ENCODE measurements at regions of chr2 and their contacts with region 1.

Region 1: GRCh38 chr2:133641497-133641896 is 73.2 kb upstream of the NCKAP5 start:
- DNase-seq: peak; percentile 99
- H3K4me3 ChIP-seq: peak overlapping the region; percentile 41 to 50 (median 44)
- H3K27ac ChIP-seq: peak overlapping the region; percentile 59
- H3K4me1 ChIP-seq: peaks cover 26% of the 10 kb centered on the region
- H3K27me3 ChIP-seq: no peaks in the 10 kb centered on the region
- CTCF ChIP-seq: peak; percentile 68 to 83

Region 2: DNA sequence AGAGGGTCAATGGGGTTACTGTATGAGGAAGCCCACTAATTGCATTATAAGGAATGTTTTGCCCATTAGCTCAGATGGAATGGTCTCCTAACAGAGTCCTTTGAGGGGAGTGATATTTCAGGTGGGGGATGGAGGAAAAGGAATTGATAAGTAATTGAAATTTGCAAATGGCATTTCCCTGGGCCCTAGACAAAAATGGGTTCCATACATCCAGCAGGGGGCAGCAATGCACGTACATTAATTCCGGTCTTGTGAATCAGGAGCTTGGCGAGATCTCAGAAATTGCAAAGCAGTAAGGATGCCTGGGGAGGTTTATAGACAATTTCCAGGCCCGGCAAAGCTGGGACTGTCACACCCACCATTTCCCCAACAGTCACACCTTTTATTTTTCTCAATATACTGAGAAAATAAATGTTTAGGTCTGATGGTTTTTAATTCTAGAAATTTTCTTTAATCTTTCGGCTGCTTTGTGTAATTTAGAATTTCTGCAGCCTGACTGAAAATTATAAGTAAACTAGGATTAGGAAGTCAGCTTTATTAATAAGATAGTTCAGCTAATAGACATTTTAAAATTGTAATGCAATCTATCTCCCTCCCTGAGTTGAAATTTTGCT is 1094.3 kb before region 1 on chr2:
- CTCF ChIA-PET with region 1: no interaction called
- dilution Hi-C with region 1: no loop called
- in situ Hi-C with region 1: no loop called
- intact Hi-C with region 1: loop called (anchors 5 kb)
- DNase-seq: peak; percentile 56
- H3K4me3 ChIP-seq: no peak overlapping the region
- H3K27ac ChIP-seq: no peak overlapping the region
- H3K4me1 ChIP-seq: peaks cover 11% of the 10 kb centered on the region
- H3K27me3 ChIP-seq: no peaks in the 10 kb centered on the region
- CTCF ChIP-seq: peak; percentile 55 to 71

Region 3: GRCh38 chr2:133266041-133266925 is 375.2 kb before region 1 on chr2:
- CTCF ChIA-PET with region 1: no interaction called
- dilution Hi-C with region 1: no loop called
- in situ Hi-C with region 1: no loop called
- intact Hi-C with region 1: loop called (anchors 1 kb)
- DNase-seq: peak; percentile 33
- H3K4me3 ChIP-seq: peak overlapping the region in 2 of 3 experiments; percentile 57
- H3K27ac ChIP-seq: no peak overlapping the region
- H3K4me1 ChIP-seq: peaks cover 13% of the 10 kb centered on the region
- H3K27me3 ChIP-seq: no peaks in the 10 kb centered on the region
- CTCF ChIP-seq: peak in 1 of 2 donors; percentile 25

Region 4: DNA sequence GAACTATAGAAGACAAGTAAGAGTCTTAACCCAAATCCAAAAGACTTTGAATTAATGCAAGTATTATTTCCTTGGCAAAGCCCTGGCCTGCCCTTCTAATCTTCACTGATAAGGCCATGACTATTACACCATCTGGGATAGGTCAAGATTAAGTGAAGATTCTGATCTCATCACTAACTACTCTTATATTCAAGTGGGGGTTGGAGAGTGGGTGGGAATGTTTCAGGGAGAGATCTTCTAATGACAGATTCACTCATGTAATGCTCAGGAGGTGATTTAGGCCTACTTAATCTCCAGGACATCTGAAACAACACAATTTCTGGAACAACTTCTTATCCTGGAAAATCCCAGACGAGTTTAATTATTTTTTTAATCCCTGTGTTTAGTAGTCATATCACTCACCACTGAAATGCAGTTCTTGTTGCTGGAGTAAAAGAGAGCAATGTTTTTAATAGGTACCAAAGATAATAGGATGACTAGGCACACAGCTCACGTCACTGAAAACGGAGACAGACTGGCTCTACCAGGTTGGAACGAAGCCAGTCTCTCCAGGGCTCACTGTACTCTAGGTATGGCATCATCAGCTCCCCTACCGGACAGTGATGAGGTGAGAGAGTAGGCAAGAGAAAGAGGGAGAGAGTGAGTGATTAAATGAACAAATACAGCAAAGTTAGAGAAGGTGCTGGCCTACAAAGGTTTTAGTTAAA is 206.4 kb before region 1 on chr2:
- CTCF ChIA-PET with region 1: no interaction called
- dilution Hi-C with region 1: no loop called
- in situ Hi-C with region 1: no loop called
- intact Hi-C with region 1: loop called (anchors 5 kb)
- DNase-seq: peak; percentile 97
- H3K4me3 ChIP-seq: no peak overlapping the region
- H3K27ac ChIP-seq: peak overlapping the region; percentile 72
- H3K4me1 ChIP-seq: peaks cover 28% of the 10 kb centered on the region
- H3K27me3 ChIP-seq: no peaks in the 10 kb centered on the region
- CTCF ChIP-seq: peak; percentile 29 to 51

Region 5: DNA sequence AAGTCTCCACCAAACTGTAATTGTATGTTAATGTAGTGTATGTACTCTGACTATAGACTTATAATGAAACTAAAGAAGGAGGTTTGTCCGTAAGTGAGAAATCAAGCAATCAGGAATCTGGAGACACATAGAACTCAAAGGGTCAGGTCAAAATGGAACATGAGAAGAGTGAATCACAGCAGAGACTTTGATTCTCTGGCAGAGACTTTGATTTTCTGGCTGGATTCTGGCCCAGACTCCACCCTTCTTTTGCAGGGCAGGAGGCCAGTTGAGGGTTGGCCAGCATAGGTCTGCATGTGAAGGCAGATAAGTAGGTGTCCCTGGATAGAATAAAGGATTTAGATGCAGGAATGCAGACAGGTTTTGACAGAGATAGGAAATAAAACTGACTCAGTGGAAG is 62.2 kb before region 1 on chr2:
- CTCF ChIA-PET with region 1: no interaction called
- dilution Hi-C with region 1: no loop called
- in situ Hi-C with region 1: no loop called
- intact Hi-C with region 1: loop called (anchors 5 kb)
- DNase-seq: peak; percentile 95
- H3K4me3 ChIP-seq: peak overlapping the region in 2 of 3 experiments; percentile 5 to 18
- H3K27ac ChIP-seq: peak overlapping the region; percentile 22
- H3K4me1 ChIP-seq: peaks cover 42% of the 10 kb centered on the region
- H3K27me3 ChIP-seq: no peaks in the 10 kb centered on the region
- CTCF ChIP-seq: no peak

Region 6: DNA sequence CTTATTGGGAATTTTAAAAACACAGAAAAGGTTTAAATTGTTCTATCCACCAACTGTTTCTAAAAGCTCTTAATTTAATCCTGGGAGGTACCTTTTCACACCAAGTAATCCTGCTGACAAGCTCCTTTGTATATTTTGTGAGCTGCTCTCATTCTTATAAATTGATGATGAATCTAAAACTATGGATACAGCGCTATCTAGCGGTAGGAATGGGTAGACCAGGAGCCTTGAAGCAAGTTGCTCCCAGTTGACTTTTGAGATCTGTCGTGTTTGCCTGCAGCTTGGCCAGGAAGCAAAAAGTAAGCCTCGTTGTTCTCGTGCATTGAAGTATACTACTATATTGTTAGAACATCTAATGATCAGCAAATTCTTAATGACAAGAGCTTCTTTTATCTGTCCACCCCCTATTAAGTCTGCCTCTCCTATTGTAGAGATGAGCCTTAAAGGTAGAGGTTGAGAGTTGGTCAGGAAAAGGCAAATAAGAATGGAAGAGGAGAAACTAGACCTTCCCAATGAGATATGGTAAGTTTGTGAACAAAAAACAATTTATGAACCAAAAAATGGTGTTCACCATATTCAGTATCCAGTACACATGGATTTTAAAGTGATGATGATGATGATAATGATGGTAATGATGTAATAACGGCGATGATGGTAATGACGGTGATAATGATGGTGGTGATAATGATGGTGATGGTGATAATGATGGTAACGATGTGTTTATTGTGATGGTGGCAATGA is 138.8 kb after region 1 on chr2:
- CTCF ChIA-PET with region 1: interaction called, 3 read pairs
- dilution Hi-C with region 1: no loop called
- in situ Hi-C with region 1: no loop called
- intact Hi-C with region 1: loop called (anchors 2 kb)
- DNase-seq: peak; percentile 70
- H3K4me3 ChIP-seq: no peak overlapping the region
- H3K27ac ChIP-seq: no peak overlapping the region
- H3K4me1 ChIP-seq: no peaks in the 10 kb centered on the region
- H3K27me3 ChIP-seq: no peaks in the 10 kb centered on the region
- CTCF ChIP-seq: peak; percentile 81

Measured in mammary epithelial cell (primary cell).